ENCODE measurements at regions of chr17 and their contacts with region 1.

Region 1: GRCh38 chr17:78112518-78113226 is 15.9 kb downstream of the TMC6 start:
- DNase-seq: peak; percentile 91
- ATAC-seq: peak; percentile 65

Region 2: GRCh38 chr17:78176548-78177025 is 63.9 kb after region 1 on chr17:
- intact Hi-C with region 1: loop called (anchors 1 kb)
- DNase-seq: peak; percentile 91
- ATAC-seq: peak; percentile 18

Region 3: DNA sequence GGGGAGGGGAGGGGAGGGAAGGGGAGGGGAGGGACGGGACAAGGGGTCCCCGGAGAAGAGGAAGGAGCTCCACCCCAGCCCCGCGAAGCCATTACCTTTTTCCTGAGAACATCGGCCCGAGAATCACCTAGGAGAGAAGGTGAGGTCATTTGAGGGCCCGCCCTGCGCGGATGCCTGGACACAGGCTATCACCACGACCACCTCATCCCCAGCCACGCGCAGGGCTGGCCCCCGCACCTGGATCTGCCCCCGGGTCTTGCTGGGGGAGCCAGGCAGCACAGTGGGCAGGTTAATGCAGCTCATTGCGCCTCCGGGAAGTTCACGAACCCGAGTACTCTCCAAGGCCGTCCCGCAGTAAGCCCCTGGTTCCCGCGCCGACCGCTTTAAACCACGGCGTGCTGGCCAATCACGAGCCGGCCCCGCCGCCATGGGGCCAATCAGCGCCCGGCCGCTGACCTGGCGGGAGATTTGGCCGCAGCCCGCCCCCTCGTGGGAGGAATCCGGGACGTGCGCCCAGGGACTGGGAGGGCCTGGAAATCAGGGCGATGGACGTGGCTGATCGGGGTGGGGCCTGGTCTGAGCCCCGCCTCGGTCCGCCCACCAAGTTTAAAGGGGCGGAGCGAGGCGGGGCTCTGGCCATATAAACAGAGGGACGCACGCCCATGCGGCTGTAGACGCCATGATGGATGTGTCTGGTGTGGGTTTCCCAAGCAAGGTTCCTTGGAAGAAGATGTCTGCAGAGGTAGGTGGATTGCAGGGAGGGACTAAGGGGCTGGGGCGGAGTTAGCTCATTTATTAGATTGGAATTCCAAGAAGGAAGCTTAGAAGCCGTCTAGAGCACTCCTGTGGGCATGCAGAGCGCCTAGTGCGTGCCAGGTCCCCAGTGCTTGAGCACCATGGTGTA is 74.3 kb after region 1 on chr17 and contains the starts of genes AFMID and TK1:
- intact Hi-C with region 1: loop called (anchors 2 kb)
- DNase-seq: peak; percentile 97
- ATAC-seq: peak; percentile 98
- total RNA-seq, gene AFMID: 38.2 TPM
- total RNA-seq, gene TK1: 5.2 TPM

Region 4: DNA sequence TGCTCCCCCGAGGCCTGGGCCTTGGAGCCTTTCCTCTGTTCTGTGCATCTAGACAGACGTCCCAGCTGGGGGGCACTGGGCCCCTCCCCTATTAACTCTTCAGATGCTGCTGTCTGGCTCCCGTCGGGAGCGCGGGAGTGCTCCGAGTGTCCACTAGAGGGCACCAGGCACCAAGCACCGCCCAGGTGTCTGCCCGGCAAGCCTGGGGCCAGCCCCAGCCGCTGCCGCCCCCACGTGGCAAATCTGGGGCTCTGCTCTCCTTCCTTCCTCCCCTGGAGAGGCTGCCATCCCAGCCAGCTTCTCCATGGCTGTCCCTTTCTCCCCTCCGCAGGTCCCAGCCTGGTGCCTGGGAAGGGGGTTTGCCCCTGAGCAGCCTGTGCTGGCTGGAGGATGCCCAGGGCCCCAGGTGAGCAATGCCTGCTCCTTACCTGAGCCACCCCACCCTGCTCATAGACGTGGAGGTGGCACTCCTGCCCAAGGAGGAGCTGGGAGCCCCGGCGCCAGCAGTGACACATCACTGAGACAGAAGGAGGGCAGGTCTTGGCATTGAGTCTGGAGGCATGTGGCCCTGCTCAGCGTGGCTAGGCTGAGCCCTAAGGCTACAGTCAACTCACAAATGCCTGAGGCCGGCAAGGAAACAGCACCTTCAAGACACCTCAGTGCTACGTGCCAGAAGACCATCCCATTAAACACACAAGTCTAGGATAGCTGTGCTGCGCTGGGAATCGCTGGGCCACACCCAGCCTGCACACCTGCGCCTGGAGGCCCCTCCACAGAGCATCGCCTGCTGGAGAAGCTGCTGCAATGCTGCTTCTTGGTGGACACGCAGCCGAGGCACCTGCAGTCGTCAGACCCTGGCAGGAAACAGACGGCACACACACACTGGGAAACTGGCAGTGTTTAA is 138.5 kb after region 1 on chr17:
- intact Hi-C with region 1: loop called (anchors 2 kb)
- DNase-seq: peak; percentile 93
- ATAC-seq: peak; percentile 78